Kidney (tissue), 22 donors: ENCODE measurements at regions of chr6 and their contacts with region 1.

Region 1: DNA sequence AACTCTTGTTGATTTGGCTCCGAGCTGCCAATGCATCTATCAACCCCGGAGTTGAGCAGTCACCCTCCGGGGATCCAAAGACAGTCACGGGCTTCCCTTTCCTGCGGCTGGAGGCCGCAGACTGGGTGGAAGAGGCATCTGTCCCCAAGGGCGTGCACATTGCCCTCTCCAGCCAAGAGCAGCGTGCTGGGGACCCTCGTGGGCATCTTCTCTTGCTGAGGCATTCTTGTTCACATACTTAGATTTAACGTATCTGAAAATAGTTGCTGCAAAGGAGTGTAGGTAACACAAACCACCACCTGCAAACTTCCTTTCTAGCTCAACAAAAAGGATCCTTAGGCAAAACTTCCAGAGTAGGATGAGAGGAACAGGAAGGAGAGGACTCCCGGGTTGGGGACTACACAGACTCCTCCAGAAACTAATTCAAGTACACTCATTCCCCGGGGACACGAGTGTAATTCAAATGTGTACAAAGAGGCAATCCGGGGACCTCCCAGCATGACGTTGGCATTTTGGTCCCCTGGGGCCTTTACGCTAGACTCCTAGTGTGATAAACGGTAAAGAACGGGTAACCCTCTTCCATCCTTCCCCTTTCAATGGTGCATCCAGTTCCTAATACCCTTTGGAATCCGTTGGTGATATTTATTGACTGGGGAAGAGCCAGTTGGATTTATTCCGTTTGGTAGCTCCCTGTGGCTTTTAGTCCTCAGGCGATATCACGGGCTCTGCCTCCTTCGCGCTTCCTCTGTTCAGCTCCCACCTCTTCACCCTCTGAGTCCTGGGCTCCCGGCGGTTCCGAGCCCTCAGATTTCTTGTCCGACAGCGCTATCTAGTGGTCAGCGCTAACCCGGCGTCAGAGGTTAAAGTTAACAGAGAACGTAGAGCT is 2.7 kb upstream of the COL12A1 start:
- DNase-seq: peak; percentile 89 to 94 (median 93)
- H3K4me3 ChIP-seq: peak overlapping the region; percentile 18 to 42 (median 30)
- H3K27ac ChIP-seq: peak overlapping the region in 1 of 2 donors; percentile 48
- H3K4me1 ChIP-seq: peaks cover 0 to 16% (median 8%) of the 10 kb centered on the region in 3 donors
- H3K27me3 ChIP-seq: peaks cover 7% of the 10 kb centered on the region
- CTCF ChIP-seq: peak; percentile 92

Region 2: DNA sequence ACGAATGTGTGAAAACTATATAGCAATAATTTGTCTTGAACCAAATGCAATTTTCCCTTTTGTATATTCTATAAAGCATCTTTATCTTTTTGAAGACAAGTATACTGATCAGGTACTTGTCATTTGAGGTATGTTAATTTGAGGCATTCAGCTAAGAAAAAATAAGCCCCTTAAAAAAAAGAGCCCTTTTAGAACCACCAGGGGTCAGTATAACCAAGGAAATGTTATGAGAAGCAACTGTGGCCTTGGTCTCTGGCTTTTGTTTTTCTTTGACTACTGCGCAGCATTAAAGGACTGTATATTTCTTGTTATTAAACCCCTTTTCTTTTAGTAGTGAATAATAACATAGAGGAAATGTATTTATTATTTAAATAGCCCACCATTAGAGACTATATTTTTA is 1469.4 kb before region 1 on chr6:
- intact Hi-C with region 1: loop called (anchors 5 kb)
- DNase-seq: peak in 2 of 5 donors; percentile 83 to 89
- H3K4me3 ChIP-seq: no peak overlapping the region
- H3K27ac ChIP-seq: no peak overlapping the region
- H3K4me1 ChIP-seq: no peaks in the 10 kb centered on the region
- H3K27me3 ChIP-seq: no peaks in the 10 kb centered on the region
- CTCF ChIP-seq: peak; percentile 76

Region 3: DNA sequence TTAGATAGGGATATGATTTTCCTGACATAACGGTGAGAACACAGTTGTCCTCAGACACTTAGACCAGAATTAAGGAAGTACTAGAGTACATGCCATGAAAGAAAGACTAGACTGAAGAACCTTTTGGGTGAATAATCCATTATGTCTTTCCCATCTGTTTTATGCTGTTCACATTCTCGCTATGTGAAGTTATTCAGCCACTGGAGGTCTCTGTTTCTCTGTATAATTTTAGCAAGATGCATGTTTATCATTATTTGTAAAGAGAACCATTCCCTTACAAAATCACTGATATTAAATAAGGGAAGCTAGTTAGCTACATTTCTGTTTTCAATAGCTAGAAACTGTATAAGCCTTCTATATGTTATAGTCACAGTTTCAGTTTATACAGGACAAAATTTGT is 1120.6 kb before region 1 on chr6:
- intact Hi-C with region 1: loop called (anchors 10 kb)
- DNase-seq: peak in 2 of 5 donors; percentile 25 to 40
- H3K4me3 ChIP-seq: no peak overlapping the region
- H3K27ac ChIP-seq: no peak overlapping the region
- H3K4me1 ChIP-seq: no peaks in the 10 kb centered on the region
- H3K27me3 ChIP-seq: no peaks in the 10 kb centered on the region
- CTCF ChIP-seq: no peak

Region 4: DNA sequence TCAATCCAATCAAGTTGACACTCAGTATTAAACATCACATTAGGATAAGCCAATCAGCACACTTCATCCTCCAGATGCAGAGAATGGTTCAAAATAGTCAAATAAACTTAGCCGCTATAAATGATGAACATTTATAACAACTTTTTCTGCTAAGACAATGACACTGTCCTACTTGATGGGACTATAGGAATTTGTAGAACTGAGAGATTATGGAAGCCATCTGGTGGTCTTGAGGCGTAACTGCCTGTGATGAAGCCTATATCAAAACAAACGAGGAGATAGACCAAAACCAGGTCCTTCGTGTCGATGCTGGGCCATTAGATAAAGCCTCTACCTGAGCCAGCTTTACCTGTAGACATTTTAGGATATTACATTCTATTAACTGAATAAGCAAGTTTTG is 633.7 kb before region 1 on chr6:
- intact Hi-C with region 1: no loop called
- DNase-seq: peak in 2 of 5 donors; percentile 19 to 29
- H3K4me3 ChIP-seq: no peak overlapping the region
- H3K27ac ChIP-seq: no peak overlapping the region
- H3K4me1 ChIP-seq: no peaks in the 10 kb centered on the region
- H3K27me3 ChIP-seq: no peaks in the 10 kb centered on the region
- CTCF ChIP-seq: peak; percentile 28

Region 5: GRCh38 chr6:74991573-74992332 is 216.8 kb before region 1 on chr6:
- intact Hi-C with region 1: no loop called
- DNase-seq: peak in 1 of 5 donors; percentile 42
- H3K4me3 ChIP-seq: no peak overlapping the region
- H3K27ac ChIP-seq: no peak overlapping the region
- H3K4me1 ChIP-seq: no peaks in the 10 kb centered on the region
- H3K27me3 ChIP-seq: no peaks in the 10 kb centered on the region
- CTCF ChIP-seq: no peak

Region 6: DNA sequence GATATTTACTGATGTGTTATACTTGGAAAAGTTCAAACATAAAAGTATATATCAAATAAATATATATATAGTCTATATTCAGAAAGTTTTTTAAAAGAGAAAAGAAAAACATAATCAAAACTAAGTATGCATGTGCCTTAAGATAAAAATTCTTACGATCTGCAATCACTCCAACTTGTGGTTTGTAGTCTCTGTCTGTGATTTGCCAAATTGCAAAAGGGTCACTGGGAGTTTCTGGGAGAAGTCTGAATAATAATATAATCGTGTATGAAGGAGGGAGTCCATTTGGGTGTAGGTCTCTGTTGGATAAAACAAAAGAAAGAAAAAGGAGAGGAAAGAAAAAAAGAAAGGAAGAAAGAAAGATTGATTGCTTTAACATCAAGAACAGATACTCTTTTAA is 95.1 kb before region 1 on chr6:
- intact Hi-C with region 1: no loop called
- DNase-seq: no peak
- H3K4me3 ChIP-seq: no peak overlapping the region
- H3K27ac ChIP-seq: no peak overlapping the region
- H3K4me1 ChIP-seq: peaks cover 0 to 6% (median 0%) of the 10 kb centered on the region in 3 donors
- H3K27me3 ChIP-seq: no peaks in the 10 kb centered on the region
- CTCF ChIP-seq: no peak

Region 7: DNA sequence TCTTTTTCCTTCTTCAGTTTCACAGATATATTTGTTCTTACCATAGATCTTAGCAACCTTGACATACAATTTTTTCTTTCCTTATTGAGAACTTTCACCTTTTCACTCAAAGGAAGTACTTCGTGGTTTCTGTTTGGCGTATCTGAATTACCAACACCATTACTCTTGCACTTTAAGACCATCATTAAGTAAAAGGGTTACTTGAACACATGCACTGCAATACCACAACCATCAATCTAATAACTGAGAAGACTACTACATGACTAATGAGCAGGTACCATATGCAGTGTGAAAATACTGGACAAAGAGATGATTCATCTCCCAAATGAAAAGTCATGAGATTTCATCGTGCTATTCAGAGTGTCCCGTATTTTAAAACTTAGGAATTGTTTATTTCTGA is 371.4 kb after region 1 on chr6:
- intact Hi-C with region 1: no loop called
- DNase-seq: no peak
- H3K4me3 ChIP-seq: no peak overlapping the region
- H3K27ac ChIP-seq: no peak overlapping the region
- H3K4me1 ChIP-seq: no peaks in the 10 kb centered on the region
- H3K27me3 ChIP-seq: no peaks in the 10 kb centered on the region
- CTCF ChIP-seq: no peak